Posterior vena cava (tissue), 2 donors: ENCODE measurements at regions of chr12 and their contacts with region 1.

Region 1: DNA sequence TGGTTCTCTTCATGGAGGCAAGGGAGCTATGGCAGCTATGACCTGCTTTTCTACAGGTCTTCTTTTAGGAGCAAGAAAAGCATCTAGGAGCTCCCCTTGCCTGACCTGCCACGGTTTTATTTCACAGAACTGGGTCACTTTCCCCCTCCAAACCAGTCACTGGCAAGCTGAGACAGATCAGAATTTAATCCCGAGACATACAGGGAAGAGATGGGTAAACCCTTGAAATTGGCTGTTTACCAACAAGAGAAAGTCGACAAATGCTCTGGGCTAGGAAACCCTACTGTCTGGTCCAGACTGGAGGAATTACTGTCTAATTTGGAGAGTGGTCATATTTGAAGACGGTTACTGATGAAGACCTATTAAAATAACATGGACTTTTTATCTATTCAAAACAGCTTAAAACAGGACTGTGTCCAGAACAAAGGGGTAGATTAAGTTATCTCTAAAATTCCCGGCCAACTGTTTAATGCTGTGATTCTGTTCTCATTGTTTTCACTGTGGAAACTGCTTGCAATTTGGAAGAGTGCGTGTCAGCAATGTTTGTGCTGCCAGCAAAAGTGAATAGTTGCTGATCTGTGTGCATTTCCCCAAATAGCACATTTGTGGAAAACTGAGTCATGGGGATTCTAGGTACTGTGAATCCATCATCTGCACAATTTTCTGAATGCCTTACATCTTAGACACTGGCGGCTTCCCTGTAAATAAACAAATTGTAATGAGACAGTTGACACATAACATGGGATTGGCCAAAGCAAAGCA is 73.4 kb upstream of the EEA1 start:
- DNase-seq: no peak

Region 2: DNA sequence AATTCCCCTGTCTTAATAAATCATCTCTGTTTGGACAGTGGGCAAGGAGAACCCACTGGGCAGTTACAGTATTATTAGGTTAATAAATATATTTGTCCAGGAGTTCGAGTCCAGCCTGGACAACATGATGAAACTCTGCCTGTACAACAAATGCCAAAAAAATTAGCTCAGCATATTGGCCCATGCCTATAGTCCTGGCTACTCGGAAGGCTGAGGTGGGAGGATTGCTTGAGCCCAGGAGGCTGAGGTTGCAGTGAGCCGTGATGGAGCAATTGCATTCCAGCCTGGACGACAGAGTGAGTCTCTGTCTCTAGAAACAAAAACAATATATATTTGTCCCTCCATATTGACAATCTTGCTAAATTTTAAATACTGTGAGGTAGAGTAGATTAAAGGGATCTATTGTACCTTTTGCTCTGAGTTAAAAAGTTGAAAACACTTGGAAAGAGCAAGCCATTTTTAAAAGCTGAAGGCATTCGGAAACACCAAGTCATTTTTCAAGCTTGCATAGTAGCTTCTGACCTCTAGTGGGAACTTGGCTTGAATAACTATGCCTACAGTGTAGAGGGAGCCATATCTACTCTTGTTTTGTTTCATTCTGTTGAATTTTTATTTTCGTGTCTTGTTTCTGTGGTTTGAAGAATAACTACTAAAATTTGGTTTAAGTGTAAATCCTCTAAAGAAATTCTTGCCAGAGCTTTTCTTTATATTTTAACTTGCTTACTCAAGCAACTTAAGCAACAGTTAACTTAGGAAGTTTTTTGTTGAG is 58.8 kb before region 1 on chr12:
- intact Hi-C with region 1: no loop called
- DNase-seq: no peak

Region 3: DNA sequence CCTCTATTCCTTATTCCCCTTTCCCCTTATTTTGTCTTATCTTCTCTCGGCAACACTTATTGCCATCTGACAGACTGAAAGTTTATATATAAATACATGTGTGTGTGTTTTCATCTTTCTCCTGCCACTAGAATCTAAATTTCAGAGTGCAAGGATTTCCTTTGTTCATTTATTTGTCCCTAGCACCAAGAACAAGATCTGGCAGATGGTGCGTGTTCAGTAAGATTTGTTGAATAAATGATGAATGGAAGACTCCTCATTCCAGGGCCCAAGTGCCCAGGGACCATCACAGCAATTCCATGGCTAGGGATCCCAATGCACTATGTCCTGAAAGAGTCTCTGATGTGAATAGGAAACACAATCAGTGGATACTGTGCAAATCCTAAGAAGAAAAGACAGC is 24.6 kb after region 1 on chr12:
- intact Hi-C with region 1: loop called in 1 of 2 experiments (anchors 1 kb)
- DNase-seq: no peak

Region 4: DNA sequence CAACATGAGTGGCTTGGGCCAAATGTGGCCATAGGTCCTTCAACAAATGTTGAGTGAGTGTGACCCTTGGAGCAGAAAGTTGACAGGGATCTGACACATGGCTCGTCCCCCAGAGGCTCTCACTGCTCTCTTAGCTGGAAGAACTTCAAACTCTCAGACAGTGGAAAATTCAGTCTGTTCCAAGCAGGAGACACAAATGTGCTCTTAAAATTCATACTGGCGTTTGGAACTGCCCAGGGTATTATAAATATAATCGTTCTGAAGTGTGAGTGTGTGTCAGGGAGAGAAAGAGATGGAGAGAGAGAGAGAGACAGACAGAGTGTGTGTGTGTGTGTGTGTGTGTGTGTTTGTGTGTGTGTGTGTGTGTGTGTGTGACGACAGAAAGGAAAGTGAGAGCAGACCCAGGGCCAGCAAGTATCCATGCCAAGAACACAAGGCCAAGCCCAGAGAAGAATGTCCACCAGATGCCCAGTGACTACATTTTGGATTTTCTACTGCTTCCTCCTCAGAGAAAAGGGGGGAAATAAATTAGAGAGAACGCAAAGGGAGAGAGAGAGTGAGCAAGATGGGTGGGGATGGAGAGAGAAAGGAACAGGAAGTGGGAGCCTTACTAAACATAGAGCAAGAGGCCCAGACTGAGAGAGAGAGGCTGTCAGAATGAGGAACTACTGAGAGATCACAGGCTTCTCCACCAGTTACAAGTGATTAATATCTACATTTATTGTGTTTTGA is 181.6 kb after region 1 on chr12:
- intact Hi-C with region 1: loop called in 1 of 2 experiments (anchors 10 kb)
- DNase-seq: peak; percentile 82